ENCODE measurements at regions of chr1 and their contacts with region 1.

Region 1: GRCh38 chr1:209692745-209693504 is 11.7 kb upstream of the HSD11B1 start:
- DNase-seq: peak; percentile 88
- ATAC-seq: peak; percentile 68
- H3K4me3 Mint-ChIP-seq: no peak overlapping the region
- H3K27ac Mint-ChIP-seq: peak overlapping the region; percentile 43
- H3K4me1 Mint-ChIP-seq: peaks cover 40% of the 10 kb centered on the region
- H3K27me3 Mint-ChIP-seq: no peaks in the 10 kb centered on the region

Region 2: GRCh38 chr1:209443971-209444651 is 248.8 kb before region 1 on chr1:
- CTCF ChIA-PET with region 1: no interaction called
- POLR2A ChIA-PET with region 1: no interaction called
- intact Hi-C with region 1: no loop called
- DNase-seq: no peak
- ATAC-seq: no peak
- H3K4me3 Mint-ChIP-seq: no peak overlapping the region
- H3K27ac Mint-ChIP-seq: no peak overlapping the region
- H3K4me1 Mint-ChIP-seq: no peaks in the 10 kb centered on the region
- H3K27me3 Mint-ChIP-seq: no peaks in the 10 kb centered on the region

Region 3: GRCh38 chr1:209565759-209566678 is 126.9 kb before region 1 on chr1:
- CTCF ChIA-PET with region 1: interaction called, 21 read pairs
- POLR2A ChIA-PET with region 1: no interaction called
- intact Hi-C with region 1: loop called (anchors 1 kb)
- DNase-seq: peak; percentile 88
- ATAC-seq: peak; percentile 89
- H3K4me3 Mint-ChIP-seq: no peak overlapping the region
- H3K27ac Mint-ChIP-seq: no peak overlapping the region
- H3K4me1 Mint-ChIP-seq: peaks cover 21% of the 10 kb centered on the region
- H3K27me3 Mint-ChIP-seq: peaks cover 9% of the 10 kb centered on the region

Region 4: DNA sequence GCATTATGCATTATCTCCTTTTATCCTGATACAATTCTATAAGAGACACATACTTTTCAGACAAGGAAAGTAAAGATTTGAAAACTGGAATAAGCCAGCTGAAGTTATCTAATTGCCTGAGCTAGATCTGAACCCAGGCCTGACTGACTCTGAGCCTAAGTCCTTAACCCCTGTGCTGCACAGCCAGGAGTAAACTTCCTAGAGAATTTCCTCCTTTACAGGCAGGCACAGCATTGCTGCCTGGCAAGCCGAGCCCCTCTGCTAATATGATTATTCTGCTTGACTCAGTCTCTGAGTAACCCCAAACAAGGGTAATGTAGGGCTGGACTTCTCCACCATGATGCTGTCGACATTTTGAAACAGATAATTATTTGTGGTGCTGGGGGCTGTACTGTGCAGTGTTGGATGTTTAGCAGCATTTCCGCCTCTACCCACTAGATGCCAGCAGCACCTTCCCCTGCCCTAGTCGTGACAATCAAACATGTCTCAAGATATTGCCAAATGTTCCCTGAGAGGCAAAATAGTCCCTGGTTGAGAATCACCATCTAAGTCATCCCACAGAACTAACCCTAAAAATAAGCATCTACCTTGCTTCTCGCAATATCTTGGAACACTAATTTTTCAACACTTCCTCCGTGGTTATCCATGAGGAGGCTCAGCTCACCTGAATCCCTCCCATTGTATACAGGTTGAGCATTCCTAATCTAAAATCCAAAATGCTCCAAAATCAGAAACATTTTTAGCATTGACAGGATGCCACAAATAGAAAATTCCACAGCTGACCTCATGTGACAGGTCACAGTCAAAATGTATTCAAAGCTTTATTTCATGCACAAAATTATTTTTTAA is 90.9 kb before region 1 on chr1:
- CTCF ChIA-PET with region 1: interaction called, 6 read pairs
- POLR2A ChIA-PET with region 1: no interaction called
- intact Hi-C with region 1: loop called (anchors 1 kb)
- DNase-seq: peak; percentile 63
- ATAC-seq: peak; percentile 94
- H3K4me3 Mint-ChIP-seq: no peak overlapping the region
- H3K27ac Mint-ChIP-seq: no peak overlapping the region
- H3K4me1 Mint-ChIP-seq: peaks cover 3% of the 10 kb centered on the region
- H3K27me3 Mint-ChIP-seq: peaks cover 9% of the 10 kb centered on the region

Region 5: DNA sequence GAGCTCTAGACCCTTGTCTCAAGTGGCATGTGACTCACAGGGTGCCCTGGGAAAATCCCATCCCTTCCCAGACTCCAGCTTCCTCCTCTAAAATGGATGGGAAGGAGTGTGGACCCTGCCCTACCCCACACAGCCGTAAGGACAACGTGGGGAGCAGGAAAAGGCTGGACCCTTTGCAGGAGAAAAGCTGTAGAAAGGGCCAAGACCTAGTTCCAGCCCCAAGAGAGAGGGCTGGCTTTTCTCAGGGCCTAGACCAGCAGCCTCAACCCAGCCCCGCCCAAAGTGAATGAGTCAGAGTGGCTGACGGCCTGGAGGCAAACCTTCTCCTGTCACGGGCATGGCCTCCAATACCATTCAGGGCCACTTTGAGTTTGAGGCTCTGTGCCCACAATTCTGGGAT is 41.8 kb before region 1 on chr1:
- CTCF ChIA-PET with region 1: interaction called, 10 read pairs
- POLR2A ChIA-PET with region 1: no interaction called
- intact Hi-C with region 1: loop called in 1 of 2 experiments (anchors 2 kb)
- DNase-seq: peak; percentile 84
- ATAC-seq: peak; percentile 91
- H3K4me3 Mint-ChIP-seq: no peak overlapping the region
- H3K27ac Mint-ChIP-seq: peak overlapping the region; percentile 73
- H3K4me1 Mint-ChIP-seq: peaks cover 54% of the 10 kb centered on the region
- H3K27me3 Mint-ChIP-seq: no peaks in the 10 kb centered on the region

Region 6: DNA sequence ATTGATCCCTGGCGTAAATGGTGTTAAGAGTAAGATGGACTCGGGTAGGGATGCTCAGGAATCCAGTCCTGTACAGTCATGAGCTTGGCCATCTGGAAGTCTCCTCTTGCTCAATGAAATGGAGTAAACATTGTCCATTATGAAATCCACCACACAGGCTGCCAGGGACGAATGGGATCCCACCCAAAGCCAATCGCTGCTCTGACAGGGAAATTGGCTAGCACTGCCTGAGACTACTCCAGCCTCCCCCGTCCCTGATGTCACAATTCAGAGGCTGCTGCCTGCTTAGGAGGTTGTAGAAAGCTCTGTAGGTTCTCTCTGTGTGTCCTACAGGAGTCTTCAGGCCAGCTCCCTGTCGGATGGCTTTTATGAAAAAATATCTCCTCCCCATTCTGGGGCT is 11.7 kb after region 1 on chr1 and contains the start of gene HSD11B1:
- CTCF ChIA-PET with region 1: interaction called, 23 read pairs
- POLR2A ChIA-PET with region 1: no interaction called
- intact Hi-C with region 1: no loop called
- DNase-seq: no peak
- ATAC-seq: no peak
- H3K4me3 Mint-ChIP-seq: peak within 1 kb of the TSS; percentile 32
- H3K27ac Mint-ChIP-seq: peak within 1 kb of the TSS; percentile 82
- H3K4me1 Mint-ChIP-seq: peaks cover 39% of the 10 kb centered on the region
- H3K27me3 Mint-ChIP-seq: no peaks in the 10 kb centered on the region
- total RNA-seq, gene HSD11B1: 4.5 to 5.7 TPM

Measured in activated CD4-positive, alpha-beta T cell treated with anti-CD3 and anti-CD28 coated beads for 36 hours (primary cell).